ENCODE measurements at regions of chr4 and their contacts with region 1.

Region 1: GRCh38 chr4:23789766-23790165 is 100.1 kb downstream of the PPARGC1A start:
- DNase-seq: peak; percentile 28
- ATAC-seq: no peak
- H3K4me3 ChIP-seq: no peak overlapping the region
- H3K27ac ChIP-seq: no peak overlapping the region
- H3K4me1 ChIP-seq: peaks cover 32% of the 10 kb centered on the region
- H3K27me3 ChIP-seq: no peaks in the 10 kb centered on the region
- CTCF ChIP-seq: no peak
- EP300 ChIP-seq: no peak
- POLR2A ChIP-seq: no peak
- RAD21 ChIP-seq: no peak

Region 2: DNA sequence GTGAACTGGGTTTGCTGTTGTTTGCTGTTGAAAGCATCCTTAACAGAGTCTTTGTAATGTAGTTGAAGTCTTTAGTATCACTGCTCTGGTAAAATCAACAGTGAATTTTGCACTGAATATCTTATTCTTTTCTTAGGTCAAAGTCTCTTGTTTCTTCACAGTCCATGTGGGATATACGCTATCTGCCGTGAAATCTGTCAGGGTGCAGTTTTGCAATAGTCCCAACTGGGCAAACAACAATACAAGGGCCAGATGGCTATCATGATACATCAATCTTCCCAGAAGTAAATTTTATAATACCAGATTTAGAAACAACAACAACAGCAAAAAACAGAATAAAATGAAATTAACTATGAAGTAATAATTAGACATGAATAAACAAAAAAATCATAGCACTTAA is 23.4 kb before region 1 on chr4:
- CTCF ChIA-PET with region 1: no interaction called
- POLR2A ChIA-PET with region 1: no interaction called
- in situ Hi-C with region 1: no loop called
- intact Hi-C with region 1: loop called (anchors 2 kb)
- DNase-seq: peak; percentile 3
- ATAC-seq: no peak
- H3K4me3 ChIP-seq: no peak overlapping the region
- H3K27ac ChIP-seq: no peak overlapping the region
- H3K4me1 ChIP-seq: peaks cover 39% of the 10 kb centered on the region
- H3K27me3 ChIP-seq: no peaks in the 10 kb centered on the region
- CTCF ChIP-seq: no peak
- EP300 ChIP-seq: no peak
- POLR2A ChIP-seq: no peak
- RAD21 ChIP-seq: no peak

Region 3: DNA sequence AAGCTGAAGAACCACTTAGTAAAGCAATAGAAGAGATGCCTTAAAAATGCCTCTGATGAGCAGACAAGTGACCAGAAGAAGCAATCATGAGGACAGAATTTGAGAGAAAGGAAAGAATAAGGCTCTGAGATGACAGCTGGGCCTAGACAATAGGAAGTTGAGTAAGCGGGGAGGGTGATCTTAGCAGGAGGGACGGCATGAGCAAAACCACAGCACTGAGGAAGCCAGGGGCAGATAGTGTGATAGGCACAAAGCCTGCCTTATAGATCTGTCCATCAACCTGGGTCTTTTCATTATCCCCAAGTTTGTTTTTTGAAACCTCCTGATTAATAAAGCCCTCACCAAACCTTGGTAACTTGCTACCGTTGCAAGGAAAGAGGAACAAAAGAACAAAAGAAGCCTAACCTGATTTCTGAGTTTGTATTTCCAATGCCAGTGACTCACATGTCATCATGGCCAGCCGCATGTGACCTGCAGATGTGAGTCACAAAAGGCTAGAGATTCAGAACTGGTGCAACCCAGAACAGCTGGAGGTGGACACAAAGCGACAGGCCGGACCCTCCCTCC is 155.8 kb after region 1 on chr4:
- CTCF ChIA-PET with region 1: no interaction called
- POLR2A ChIA-PET with region 1: no interaction called
- in situ Hi-C with region 1: no loop called
- intact Hi-C with region 1: no loop called
- DNase-seq: peak; percentile 10
- ATAC-seq: no peak
- H3K4me3 ChIP-seq: no peak overlapping the region
- H3K27ac ChIP-seq: no peak overlapping the region
- H3K4me1 ChIP-seq: no peaks in the 10 kb centered on the region
- H3K27me3 ChIP-seq: peaks cover 0 to 7% of the 10 kb centered on the region in 2 experiments; a peak in 2 of 5 replicates
- CTCF ChIP-seq: no peak
- EP300 ChIP-seq: no peak
- POLR2A ChIP-seq: no peak
- RAD21 ChIP-seq: no peak